Heart right ventricle (tissue), 16 donors: ENCODE measurements at regions of chr17 and their contacts with region 1.

Region 1: DNA sequence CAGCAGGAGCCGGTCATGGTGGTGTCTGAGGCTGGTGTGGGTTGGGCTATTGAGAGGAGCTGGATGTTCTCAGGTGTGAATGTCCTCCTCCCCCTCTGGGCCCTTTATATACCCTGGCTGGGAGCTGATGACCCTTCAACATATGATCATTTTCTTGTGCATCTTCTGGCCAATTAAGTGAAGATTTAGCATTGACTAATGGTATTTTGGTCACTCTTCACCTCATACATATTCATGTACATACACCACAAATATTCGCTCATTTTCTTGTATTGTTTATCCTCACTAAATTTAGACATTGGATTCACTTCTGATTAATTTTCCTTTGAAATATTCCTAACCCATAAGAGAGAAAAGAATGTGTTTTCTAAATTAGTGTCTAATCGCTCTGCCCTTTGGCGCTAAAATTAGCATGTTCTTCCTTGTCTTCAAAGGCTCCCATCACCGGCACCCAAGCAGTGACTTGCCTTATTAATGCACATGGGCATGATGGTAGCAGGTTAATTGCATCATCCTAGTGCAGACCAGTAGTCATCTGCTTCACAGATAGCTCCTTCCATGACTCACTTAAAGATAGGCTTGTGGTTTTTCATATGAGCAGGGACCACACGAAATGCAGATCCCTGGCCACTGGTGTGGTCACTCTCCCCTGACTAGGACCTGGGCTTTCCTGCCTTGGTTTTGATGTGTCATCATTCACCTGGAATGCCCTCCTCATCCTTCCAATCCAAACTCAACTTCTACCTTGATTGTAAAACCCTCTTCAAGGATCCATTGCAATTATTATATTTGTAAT is at the start of gene KRTAP2-4:
- DNase-seq: no peak
- ATAC-seq: no peak
- H3K4me3 ChIP-seq: no peak within 1 kb of the TSS
- H3K27ac ChIP-seq: no peak within 1 kb of the TSS
- H3K4me1 ChIP-seq: no peaks in the 10 kb centered on the region
- H3K27me3 ChIP-seq: peaks cover 0 to 41% (median 22%) of the 10 kb centered on the region in 7 donors
- CTCF ChIP-seq: no peak
- total RNA-seq, gene KRTAP2-4: not detected

Region 2: GRCh38 chr17:41116297-41116696 is 50.3 kb after region 1 on chr17:
- intact Hi-C with region 1: loop called in 1 of 10 experiments (anchors 5 kb)
- DNase-seq: no peak
- ATAC-seq: no peak
- H3K4me3 ChIP-seq: no peak overlapping the region
- H3K27ac ChIP-seq: no peak overlapping the region
- H3K4me1 ChIP-seq: no peaks in the 10 kb centered on the region
- H3K27me3 ChIP-seq: peaks cover 0 to 23% (median 6%) of the 10 kb centered on the region in 7 donors
- CTCF ChIP-seq: no peak